A549 (cell line): ENCODE measurements at regions of chr2 and their contacts with region 1.

Region 1: GRCh38 chr2:169824373-169825333 is at the start of gene METTL5:
- DNase-seq: peak; percentile 82 to 84
- ATAC-seq: peak; percentile 73 to 83
- H3K4me3 ChIP-seq: peak within 1 kb of the TSS; percentile 57
- H3K27ac ChIP-seq: peak within 1 kb of the TSS; percentile 77 to 96
- H3K4me1 ChIP-seq: peaks cover 43% of the 10 kb centered on the region
- CTCF ChIP-seq: peak; percentile 99
- EP300 ChIP-seq: no peak
- POLR2A ChIP-seq: peak; percentile 90
- RAD21 ChIP-seq: peak; percentile 79 to 86
- polyA plus RNA-seq, gene METTL5: 58.1 and 86.9 TPM in 2 replicates

Region 2: GRCh38 chr2:169877398-169877797 is 52.7 kb after region 1 on chr2:
- CTCF ChIA-PET with region 1: interaction called, 11 read pairs
- POLR2A ChIA-PET with region 1: interaction called, 5 read pairs
- DNase-seq: peak in 1 of 2 experiments; percentile 54
- ATAC-seq: peak; percentile 59 to 75; a peak in 3 of 6 replicates
- H3K4me3 ChIP-seq: no peak overlapping the region
- H3K27ac ChIP-seq: no peak overlapping the region
- H3K4me1 ChIP-seq: no peaks in the 10 kb centered on the region
- CTCF ChIP-seq: peak; percentile 49
- EP300 ChIP-seq: no peak
- POLR2A ChIP-seq: no peak
- RAD21 ChIP-seq: peak; percentile 49 to 55; a peak in 4 of 5 replicates

Region 3: DNA sequence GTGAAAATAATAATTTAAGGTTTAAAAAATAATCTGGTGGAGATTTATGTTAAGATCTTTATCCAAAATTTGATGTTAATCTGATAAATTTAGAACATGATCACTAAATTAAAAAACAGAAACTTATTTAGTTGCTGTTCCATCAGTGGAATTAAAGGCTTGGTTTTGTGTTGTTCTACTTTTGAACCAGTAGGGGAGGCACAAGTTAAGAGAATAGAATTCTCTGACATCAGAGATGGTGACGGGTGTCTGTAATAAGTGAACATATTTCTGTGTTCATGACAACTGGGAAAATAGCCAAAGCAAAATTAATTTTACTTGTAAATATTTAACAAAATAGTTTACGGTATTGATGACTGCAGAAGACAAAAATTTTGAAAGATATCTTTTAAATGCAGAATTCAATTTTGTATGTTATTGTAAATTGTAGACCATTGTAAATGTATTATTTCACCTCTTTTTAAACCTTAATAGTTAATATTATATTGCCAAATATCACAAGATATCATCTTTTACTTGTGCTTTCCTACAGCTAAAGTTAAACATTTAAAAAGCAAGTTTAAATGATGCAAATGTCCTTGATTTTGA is 108.6 kb after region 1 on chr2:
- CTCF ChIA-PET with region 1: interaction called, 16 read pairs
- POLR2A ChIA-PET with region 1: no interaction called
- DNase-seq: peak; percentile 22 to 57
- ATAC-seq: peak; percentile 80 to 82; a peak in 4 of 6 replicates
- H3K4me3 ChIP-seq: no peak overlapping the region
- H3K27ac ChIP-seq: no peak overlapping the region
- H3K4me1 ChIP-seq: no peaks in the 10 kb centered on the region
- CTCF ChIP-seq: peak; percentile 81
- EP300 ChIP-seq: no peak
- POLR2A ChIP-seq: no peak
- RAD21 ChIP-seq: peak; percentile 83 to 86